ENCODE measurements at regions of chr21 and their contacts with region 1.

Region 1: GRCh38 chr21:29145354-29145782 is 14.9 kb downstream of the MAP3K7CL start:
- DNase-seq: peak; percentile 69
- H3K4me3 ChIP-seq: no peak overlapping the region
- H3K27ac ChIP-seq: peak overlapping the region; percentile 63 to 77 (median 71)
- H3K4me1 ChIP-seq: peaks cover 0 to 44% (median 31%) of the 10 kb centered on the region in 4 donors
- H3K27me3 ChIP-seq: no peaks in the 10 kb centered on the region
- CTCF ChIP-seq: no peak
- EP300 ChIP-seq: peak in 3 of 4 donors; percentile 33 to 82 (median 52)
- POLR2A ChIP-seq: no peak

Region 2: GRCh38 chr21:29002442-29003144 is 142.8 kb before region 1 on chr21:
- intact Hi-C with region 1: loop called (anchors 10 kb)
- DNase-seq: peak; percentile 98
- H3K4me3 ChIP-seq: peak overlapping the region; percentile 48 to 70 (median 64)
- H3K27ac ChIP-seq: peak overlapping the region; percentile 86 to 97 (median 94)
- H3K4me1 ChIP-seq: peaks cover 0 to 10% (median 6%) of the 10 kb centered on the region in 4 donors
- H3K27me3 ChIP-seq: no peaks in the 10 kb centered on the region
- CTCF ChIP-seq: no peak
- EP300 ChIP-seq: no peak
- POLR2A ChIP-seq: peak; percentile 97 to 99

Region 3: DNA sequence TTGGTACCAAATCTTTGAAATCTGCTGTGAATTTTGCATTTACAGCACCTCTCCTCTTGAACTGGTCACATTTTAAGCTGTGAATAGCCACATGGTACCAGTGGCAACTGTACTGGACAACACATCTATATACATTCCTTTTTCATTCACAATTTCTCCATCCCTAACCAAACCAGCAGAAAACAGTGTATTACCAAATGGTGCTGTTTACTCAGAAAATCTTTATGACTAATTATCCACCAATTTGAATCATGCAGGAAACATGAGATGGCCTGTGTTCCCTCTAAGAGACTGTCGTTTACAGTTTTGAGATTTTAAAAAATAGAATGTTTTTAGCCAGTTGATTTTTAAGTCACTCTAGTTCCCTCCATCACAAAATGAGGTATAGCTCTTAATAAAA is 54.3 kb before region 1 on chr21:
- intact Hi-C with region 1: loop called (anchors 5 kb)
- DNase-seq: no peak
- H3K4me3 ChIP-seq: no peak overlapping the region
- H3K27ac ChIP-seq: peak overlapping the region in 1 of 4 donors; percentile 55
- H3K4me1 ChIP-seq: peaks cover 0 to 36% (median 21%) of the 10 kb centered on the region in 4 donors
- H3K27me3 ChIP-seq: no peaks in the 10 kb centered on the region
- CTCF ChIP-seq: no peak
- EP300 ChIP-seq: no peak
- POLR2A ChIP-seq: no peak

Region 4: DNA sequence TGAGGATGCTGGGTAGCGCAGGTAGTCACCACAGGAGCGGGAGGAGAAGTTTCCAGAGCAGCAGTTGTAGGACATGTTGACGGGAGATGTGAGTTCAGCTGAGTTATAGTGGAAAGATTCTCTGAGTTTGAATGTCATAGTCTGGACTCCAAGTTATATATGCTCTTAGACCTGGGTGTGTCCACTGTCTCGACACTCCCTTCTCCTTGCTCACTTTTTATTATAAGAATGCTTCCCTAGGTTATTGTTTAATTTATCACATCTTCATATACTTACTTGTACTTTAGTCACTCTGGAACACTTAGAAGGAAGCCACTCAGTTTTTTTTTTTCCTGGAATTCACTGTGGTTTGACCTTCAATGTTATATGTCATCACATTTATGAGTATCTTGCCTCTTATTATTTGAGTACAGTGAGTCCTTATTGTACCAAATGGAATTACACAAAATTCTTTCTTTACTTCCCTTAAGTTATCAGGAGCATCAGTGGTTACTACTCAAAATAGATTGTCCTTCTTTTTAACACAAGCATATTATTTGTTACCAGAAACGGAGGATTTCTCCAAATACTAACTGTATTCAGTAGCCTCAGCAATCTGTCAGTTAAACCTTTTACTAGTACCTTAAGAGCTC is 1226.9 kb after region 1 on chr21 and contains the start of gene KRTAP13-2:
- intact Hi-C with region 1: no loop called
- DNase-seq: no peak
- H3K4me3 ChIP-seq: no peak within 1 kb of the TSS
- H3K27ac ChIP-seq: no peak within 1 kb of the TSS
- H3K4me1 ChIP-seq: no peaks in the 10 kb centered on the region
- H3K27me3 ChIP-seq: no peaks in the 10 kb centered on the region
- CTCF ChIP-seq: no peak
- EP300 ChIP-seq: no peak
- POLR2A ChIP-seq: no peak
- total RNA-seq, gene KRTAP13-2: not detected

Measured in sigmoid colon (tissue), 7 donors.